Gastrocnemius medialis (tissue), 4 donors: ENCODE measurements at regions of chr4 and their contacts with region 1.

Region 1: DNA sequence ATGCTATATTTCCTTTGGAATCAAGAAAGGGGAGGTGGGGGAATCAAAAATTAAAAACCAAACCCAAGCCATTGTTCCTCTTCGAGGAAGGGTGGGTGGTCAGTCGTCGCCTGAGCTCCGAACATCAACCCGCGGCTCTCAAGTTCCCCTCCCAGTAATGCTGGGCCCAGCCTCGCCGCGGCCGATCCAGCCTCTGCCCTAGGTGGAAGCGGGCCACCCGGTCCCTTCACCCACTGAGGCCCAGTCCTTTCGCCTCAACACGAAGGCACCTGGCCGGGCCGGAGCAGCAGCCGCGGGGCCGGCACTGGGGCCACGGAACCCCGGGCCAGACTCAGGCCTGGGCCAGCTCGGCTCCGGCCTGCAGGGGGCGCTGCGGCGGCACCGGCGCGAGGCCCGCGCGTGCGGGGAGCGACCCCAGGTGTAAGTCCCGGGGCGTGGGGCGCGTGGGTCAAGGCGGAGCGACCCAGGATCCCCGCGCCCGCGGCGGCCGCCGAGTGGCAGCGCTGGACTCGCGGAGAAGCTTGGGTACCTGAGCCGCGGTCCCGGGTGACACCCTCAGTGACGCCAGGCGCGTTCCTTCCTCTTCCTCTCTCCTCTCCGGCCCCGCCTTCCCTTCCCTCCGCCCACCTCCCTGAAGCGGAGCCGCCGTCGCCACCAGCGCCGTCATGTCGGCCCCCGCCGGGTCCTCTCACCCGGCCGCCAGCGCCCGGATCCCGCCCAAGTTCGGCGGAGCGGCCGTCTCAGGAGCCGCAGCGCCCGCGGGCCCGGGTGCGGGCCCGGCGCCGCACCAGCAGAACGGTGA is at the start of gene SEC24B:
- DNase-seq: peak; percentile 82 to 83
- ATAC-seq: peak; percentile 94
- H3K4me3 ChIP-seq: peak within 1 kb of the TSS; percentile 53 to 80 (median 76)
- H3K27ac ChIP-seq: peak within 1 kb of the TSS; percentile 79 to 94 (median 88)
- H3K4me1 ChIP-seq: peaks cover 44 to 48% of the 10 kb centered on the region in 2 donors
- H3K27me3 ChIP-seq: no peaks in the 10 kb centered on the region
- CTCF ChIP-seq: peak; percentile 71 to 99 (median 97)
- POLR2A ChIP-seq: peak; percentile 79 to 83
- total RNA-seq, gene SEC24B: 29.6 to 93.4 (median 42.9) TPM

Region 2: GRCh38 chr4:109332926-109333464 is 100.4 kb before region 1 on chr4:
- in situ Hi-C with region 1: no loop called
- intact Hi-C with region 1: no loop called
- DNase-seq: no peak
- ATAC-seq: peak in 1 of 2 donors; percentile 30
- H3K4me3 ChIP-seq: no peak overlapping the region
- H3K27ac ChIP-seq: no peak overlapping the region
- H3K4me1 ChIP-seq: no peaks in the 10 kb centered on the region
- H3K27me3 ChIP-seq: no peaks in the 10 kb centered on the region
- CTCF ChIP-seq: peak in 3 of 5 experiments; percentile 12 to 48 (median 43)
- POLR2A ChIP-seq: no peak

Region 3: GRCh38 chr4:109532182-109532581 is 98.8 kb after region 1 on chr4:
- in situ Hi-C with region 1: loop called in 2 of 4 experiments (anchors 25 kb)
- intact Hi-C with region 1: loop called (anchors 10 kb)
- DNase-seq: no peak
- ATAC-seq: no peak
- H3K4me3 ChIP-seq: no peak overlapping the region
- H3K27ac ChIP-seq: no peak overlapping the region
- H3K4me1 ChIP-seq: no peaks in the 10 kb centered on the region
- H3K27me3 ChIP-seq: no peaks in the 10 kb centered on the region
- CTCF ChIP-seq: no peak
- POLR2A ChIP-seq: no peak

Region 4: DNA sequence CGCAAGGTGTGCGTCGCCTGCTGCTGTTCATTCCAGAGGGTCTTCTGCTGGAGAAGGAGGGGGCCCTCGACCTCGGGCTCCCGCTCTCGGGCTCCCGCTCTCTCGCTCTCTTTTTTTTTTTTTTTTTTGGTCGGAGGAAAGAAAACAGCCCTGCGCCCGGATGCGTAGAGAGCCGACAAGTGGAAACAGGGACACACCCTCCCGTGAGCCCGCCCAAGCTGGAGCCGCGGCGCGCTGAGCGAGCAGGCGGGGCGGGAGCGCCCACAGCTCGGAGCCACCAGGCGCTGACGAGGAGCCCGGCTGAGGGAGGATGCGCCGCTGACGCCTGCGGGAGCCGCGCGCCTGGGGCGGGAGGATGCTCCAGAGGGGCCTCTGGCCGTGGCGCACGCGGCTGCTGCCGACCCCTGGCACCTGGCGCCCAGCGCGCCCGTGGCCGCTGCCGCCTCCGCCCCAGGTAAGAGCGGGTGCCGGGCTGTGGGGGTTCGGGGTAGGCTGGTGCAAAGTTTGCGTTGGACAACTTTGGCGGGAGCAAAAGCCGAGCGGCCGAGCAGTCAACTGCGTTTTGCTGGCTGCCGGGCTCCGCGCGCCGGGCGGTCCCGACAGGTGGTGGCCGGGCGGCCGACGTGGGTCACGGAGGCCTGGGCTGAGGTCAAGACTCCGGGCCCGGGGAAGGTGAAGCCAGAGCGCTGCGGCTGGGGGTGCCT is 126.7 kb after region 1 on chr4 and contains the start of gene MCUB:
- in situ Hi-C with region 1: no loop called
- intact Hi-C with region 1: loop called (anchors 2 kb)
- DNase-seq: peak; percentile 44 to 66
- ATAC-seq: peak; percentile 79 to 84
- H3K4me3 ChIP-seq: peak within 1 kb of the TSS; percentile 46 to 86 (median 60)
- H3K27ac ChIP-seq: peak within 1 kb of the TSS; percentile 59 to 82 (median 71)
- H3K4me1 ChIP-seq: peaks cover 6 to 22% of the 10 kb centered on the region in 2 donors
- H3K27me3 ChIP-seq: peaks cover 6 to 26% (median 10%) of the 10 kb centered on the region in 3 donors
- CTCF ChIP-seq: no peak
- POLR2A ChIP-seq: peak; percentile 36 to 56
- total RNA-seq, gene MCUB: 2.6 to 5.6 (median 4.0) TPM

Region 5: DNA sequence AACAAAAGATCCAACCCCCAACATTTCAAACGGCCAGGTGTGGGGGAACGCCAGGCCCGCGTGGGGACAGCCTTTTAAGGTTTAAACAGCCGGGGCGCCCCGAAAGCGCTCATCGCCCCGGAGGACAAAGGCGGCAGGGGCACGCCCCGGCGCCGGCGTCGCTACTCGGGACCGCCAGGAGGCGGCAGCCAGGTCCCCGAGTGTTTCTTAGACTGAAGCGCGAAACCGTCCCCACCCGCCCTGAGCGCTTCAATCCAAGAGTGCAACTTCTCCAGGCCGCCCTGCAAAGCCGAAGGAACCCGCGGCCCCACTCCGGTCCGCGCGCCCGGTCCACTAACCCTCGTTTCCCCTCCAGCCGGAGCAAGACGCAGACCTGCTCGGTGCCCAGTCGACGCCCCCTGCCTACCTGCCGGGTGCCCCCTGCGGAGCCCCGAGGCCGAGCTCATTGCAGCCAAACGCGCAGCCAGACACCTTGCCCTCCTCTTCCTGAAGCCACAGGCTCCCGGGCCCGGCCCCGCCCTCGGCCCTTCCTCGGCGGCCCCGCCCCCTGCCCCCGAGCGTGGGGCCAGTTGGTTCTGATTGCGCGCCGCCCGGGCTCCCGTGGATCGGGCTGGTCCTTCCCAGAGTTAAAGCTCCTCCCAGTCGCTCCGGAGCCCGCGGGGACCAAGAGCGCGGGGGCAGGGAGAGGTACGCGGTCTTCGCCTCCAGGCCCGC is 269.7 kb after region 1 on chr4 and contains the start of gene CASP6:
- in situ Hi-C with region 1: loop called in 3 of 4 experiments (anchors 10 to 25 kb)
- intact Hi-C with region 1: loop called (anchors 2 kb)
- DNase-seq: peak; percentile 63 to 74
- ATAC-seq: peak; percentile 90 to 91
- H3K4me3 ChIP-seq: peak within 1 kb of the TSS; percentile 79 to 92 (median 82)
- H3K27ac ChIP-seq: peak within 1 kb of the TSS; percentile 76 to 82 (median 78)
- H3K4me1 ChIP-seq: peaks cover 8 to 13% of the 10 kb centered on the region in 2 donors
- H3K27me3 ChIP-seq: no peaks in the 10 kb centered on the region
- CTCF ChIP-seq: peak; percentile 50 to 81 (median 78)
- POLR2A ChIP-seq: peak; percentile 10 to 27
- total RNA-seq, gene CASP6: 6.6 to 25.2 (median 9.0) TPM

Region 6: GRCh38 chr4:109809655-109810054 is 376.2 kb after region 1 on chr4:
- in situ Hi-C with region 1: loop called (anchors 5 to 10 kb)
- intact Hi-C with region 1: no loop called
- DNase-seq: no peak
- ATAC-seq: no peak
- H3K4me3 ChIP-seq: no peak overlapping the region
- H3K27ac ChIP-seq: no peak overlapping the region
- H3K4me1 ChIP-seq: peaks cover 0 to 1% of the 10 kb centered on the region in 2 donors
- H3K27me3 ChIP-seq: no peaks in the 10 kb centered on the region
- CTCF ChIP-seq: no peak
- POLR2A ChIP-seq: no peak

Region 7: DNA sequence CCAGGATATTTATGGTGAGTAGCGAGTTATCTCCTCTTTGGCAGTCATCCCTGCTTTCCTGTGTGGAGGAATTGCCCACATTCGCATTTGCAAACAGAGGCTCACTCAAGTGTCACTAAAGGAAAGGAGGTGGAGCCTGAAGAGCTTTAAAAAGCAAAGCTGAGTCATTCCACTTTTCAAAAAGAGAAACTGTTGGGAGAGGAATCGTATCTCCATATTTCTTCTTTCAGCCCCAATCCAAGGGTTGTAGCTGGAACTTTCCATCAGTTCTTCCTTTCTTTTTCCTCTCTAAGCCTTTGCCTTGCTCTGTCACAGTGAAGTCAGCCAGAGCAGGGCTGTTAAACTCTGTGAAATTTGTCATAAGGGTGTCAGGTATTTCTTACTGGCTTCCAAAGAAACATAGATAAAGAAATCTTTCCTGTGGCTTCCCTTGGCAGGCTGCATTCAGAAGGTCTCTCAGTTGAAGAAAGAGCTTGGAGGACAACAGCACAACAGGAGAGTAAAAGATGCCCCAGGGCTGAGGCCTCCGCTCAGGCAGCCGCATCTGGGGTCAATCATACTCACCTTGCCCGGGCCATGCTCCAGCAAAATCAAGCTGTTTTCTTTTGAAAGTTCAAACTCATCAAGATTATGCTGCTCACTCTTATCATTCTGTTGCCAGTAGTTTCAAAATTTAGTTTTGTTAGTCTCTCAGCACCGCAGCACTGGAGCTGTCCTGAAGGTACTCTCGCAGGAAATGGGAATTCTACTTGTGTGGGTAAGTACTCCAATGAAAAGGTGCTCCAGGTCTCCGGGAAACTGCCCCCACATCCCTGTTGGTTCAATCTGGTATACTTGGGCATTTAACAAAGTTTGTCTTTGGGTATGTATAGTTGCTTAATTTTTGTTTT is 479.5 kb after region 1 on chr4 and contains the start of gene EGF:
- in situ Hi-C with region 1: no loop called
- intact Hi-C with region 1: loop called (anchors 5 kb)
- DNase-seq: peak in 1 of 2 donors; percentile 41
- ATAC-seq: peak; percentile 67 to 72
- H3K4me3 ChIP-seq: peak within 1 kb of the TSS; percentile 59 to 75 (median 62)
- H3K27ac ChIP-seq: peak within 1 kb of the TSS; percentile 91 to 96 (median 93)
- H3K4me1 ChIP-seq: peaks cover 24 to 28% of the 10 kb centered on the region in 2 donors
- H3K27me3 ChIP-seq: no peaks in the 10 kb centered on the region
- CTCF ChIP-seq: no peak
- POLR2A ChIP-seq: peak; percentile 73 to 93
- total RNA-seq, gene EGF: 12.1 to 58.5 (median 21.3) TPM